ENCODE measurements at regions of chr18 and their contacts with region 1.

Region 1: GRCh38 chr18:49768051-49768391 is 45.3 kb downstream of the ACAA2 start:
- DNase-seq: peak in 3 of 4 experiments; percentile 12 to 43 (median 21)
- ATAC-seq: peak; percentile 78
- H3K4me3 ChIP-seq: no peak overlapping the region
- H3K27ac ChIP-seq: no peak overlapping the region
- H3K4me1 ChIP-seq: no peaks in the 10 kb centered on the region
- H3K27me3 ChIP-seq: peaks cover 0 to 8% of the 10 kb centered on the region in 2 experiments; a peak in 1 of 5 replicates
- CTCF ChIP-seq: peak; percentile 44 to 56 (median 51); a peak in 5 of 6 replicates
- EP300 ChIP-seq: no peak
- POLR2A ChIP-seq: no peak
- RAD21 ChIP-seq: peak; percentile 55 to 67

Region 2: DNA sequence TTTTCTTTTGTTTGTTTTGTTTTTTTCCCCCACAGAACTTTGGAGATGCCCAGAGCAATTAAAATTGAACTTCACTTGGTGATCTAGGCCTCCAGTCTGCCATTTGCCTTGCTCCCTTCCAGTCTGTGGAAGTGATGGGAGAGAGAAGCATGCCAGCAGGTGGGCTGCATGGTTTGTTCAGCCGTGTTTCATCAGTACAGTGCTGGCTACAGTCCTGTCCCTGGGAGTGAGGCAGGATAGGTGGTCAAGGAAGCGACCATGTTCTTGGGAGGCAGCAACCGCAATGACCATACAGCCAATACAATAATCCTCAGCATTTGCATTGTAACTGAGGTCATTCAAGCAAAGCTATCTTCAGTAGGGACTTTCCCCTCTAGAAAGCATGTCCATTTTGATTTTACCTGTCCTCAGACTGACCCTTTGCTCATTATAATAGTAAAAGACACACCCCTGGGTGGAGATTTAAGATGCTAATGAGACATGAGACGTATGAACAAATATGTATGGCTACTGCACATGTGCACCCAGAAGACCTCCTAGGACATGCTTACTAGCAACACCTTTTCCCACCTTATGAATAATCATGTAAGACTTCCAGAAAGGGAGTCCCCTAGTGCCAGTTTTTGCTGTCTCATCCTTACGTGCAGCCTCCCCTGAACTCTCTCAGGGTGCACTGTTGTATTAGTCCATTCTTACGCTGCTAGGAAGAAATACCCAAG is 217.2 kb before region 1 on chr18:
- CTCF ChIA-PET with region 1: no interaction called
- POLR2A ChIA-PET with region 1: no interaction called
- in situ Hi-C with region 1: no loop called
- intact Hi-C with region 1: loop called (anchors 10 kb)
- DNase-seq: no peak
- ATAC-seq: no peak
- H3K4me3 ChIP-seq: no peak overlapping the region
- H3K27ac ChIP-seq: no peak overlapping the region
- H3K4me1 ChIP-seq: no peaks in the 10 kb centered on the region
- H3K27me3 ChIP-seq: peaks cover 0 to 2% of the 10 kb centered on the region in 2 experiments; a peak in 1 of 5 replicates
- CTCF ChIP-seq: no peak
- EP300 ChIP-seq: no peak
- POLR2A ChIP-seq: no peak
- RAD21 ChIP-seq: no peak

Measured in K562 (cell line).